CD4-positive, alpha-beta T cell (primary cell): ENCODE measurements at regions of chr1 and their contacts with region 1.

Region 1: DNA sequence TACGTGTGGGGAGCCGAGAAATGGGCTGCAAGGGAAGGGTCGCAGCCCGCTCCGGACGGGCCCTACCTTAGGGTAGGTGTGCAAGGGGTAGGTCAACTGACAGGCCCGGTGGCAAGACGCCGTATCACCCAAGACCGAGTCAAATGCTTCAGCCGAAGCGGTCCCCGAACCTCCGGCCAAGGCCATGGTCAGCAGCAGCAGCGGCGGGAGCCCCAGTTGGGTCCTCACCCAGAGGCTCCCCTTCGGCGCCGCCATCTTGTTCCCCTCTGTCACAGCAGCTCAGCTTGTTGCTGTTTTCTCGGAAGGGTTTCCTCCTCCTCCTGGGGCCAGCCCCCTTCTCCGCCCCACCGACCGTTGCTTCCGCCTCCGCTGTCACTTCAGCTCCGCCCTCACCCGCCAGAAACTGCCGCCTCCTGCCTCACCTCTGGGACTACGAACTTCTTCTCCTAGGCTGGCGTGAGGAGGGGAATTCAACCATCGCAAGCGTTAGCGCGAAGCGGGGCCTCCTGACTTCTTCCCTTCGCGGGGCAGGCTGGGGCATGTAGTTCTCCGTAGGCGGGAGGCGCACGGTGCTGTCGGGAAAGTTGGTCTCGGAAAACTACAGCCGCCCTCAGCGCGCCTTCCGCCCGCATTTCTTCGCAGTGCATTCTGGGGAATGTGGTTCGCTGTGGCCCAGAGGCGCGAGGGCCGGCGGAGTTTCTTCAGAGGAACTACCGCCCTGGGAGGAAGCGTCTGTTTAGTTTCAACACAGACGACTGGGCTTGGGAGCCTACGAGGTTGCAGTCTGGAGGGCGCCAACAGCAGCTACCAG is at the starts of genes TCEANC2 and TMEM59:
- DNase-seq: peak; percentile 93 to 99 (median 95)
- ATAC-seq: peak; percentile 89
- H3K4me3 ChIP-seq: peak within 1 kb of the TSS; percentile 89
- H3K4me3 Mint-ChIP-seq: no peak within 1 kb of the TSS
- H3K27ac ChIP-seq: peak within 1 kb of the TSS; percentile 71 to 90
- H3K27ac Mint-ChIP-seq: no peak within 1 kb of the TSS
- H3K4me1 ChIP-seq: peaks cover 35% of the 10 kb centered on the region
- H3K4me1 Mint-ChIP-seq: peaks cover 45% of the 10 kb centered on the region
- H3K27me3 ChIP-seq: no peaks in the 10 kb centered on the region
- H3K27me3 Mint-ChIP-seq: no peaks in the 10 kb centered on the region
- CTCF ChIP-seq: no peak
- total RNA-seq, gene TCEANC2: 2.3 to 2.7 TPM
- total RNA-seq, gene TMEM59: 128 TPM

Region 2: DNA sequence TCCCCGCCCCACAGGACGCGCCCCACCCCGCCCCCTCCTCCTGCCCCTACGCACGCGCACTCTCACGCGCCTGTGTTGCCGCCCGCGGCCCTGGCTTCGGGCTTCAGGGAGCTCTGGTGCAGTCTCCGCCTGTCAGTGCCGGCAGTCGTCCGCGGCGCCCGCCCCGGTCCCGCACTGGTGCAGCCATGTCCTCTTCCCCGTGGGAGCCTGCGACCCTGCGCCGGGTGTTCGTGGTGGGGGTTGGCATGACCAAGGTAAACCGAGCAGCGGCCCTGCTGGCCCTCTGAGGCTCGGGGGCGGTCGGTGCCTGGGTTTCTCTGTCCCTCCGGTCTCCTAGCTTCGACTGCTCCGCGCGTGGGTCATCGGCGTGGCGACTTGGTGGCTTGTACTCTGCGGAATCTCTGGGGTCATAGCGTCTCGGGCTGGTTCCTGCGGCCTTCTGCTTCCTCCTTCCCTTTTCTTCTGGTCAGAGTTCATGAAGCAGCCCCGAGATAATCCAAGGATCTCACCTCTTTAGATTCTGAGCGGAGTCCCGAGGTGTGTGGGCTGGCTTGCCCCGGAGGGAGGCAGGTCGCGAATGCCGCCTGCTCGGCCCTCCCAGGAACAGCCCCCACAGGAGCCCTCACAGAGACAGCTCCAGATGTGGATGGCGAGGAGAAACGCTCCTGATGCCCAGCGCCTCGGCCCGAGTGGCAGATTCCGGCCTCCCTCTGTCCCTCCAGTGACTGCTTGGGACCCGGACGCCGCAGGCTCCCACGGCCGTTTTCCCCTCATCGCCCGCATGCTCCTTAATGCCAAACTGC is 1125.7 kb before region 1 on chr1 and contains the start of gene SCP2:
- CTCF ChIA-PET with region 1: no interaction called
- POLR2A ChIA-PET with region 1: no interaction called
- intact Hi-C with region 1: loop called in 1 of 2 experiments (anchors 10 kb)
- DNase-seq: peak; percentile 64 to 90 (median 79)
- ATAC-seq: peak; percentile 96
- H3K4me3 ChIP-seq: peak within 1 kb of the TSS; percentile 85
- H3K4me3 Mint-ChIP-seq: peak within 1 kb of the TSS; percentile 81
- H3K27ac ChIP-seq: no peak within 1 kb of the TSS
- H3K27ac Mint-ChIP-seq: peak within 1 kb of the TSS; percentile 38
- H3K4me1 ChIP-seq: peaks cover 23% of the 10 kb centered on the region
- H3K4me1 Mint-ChIP-seq: peaks cover 38% of the 10 kb centered on the region
- H3K27me3 ChIP-seq: no peaks in the 10 kb centered on the region
- H3K27me3 Mint-ChIP-seq: no peaks in the 10 kb centered on the region
- CTCF ChIP-seq: no peak
- total RNA-seq, gene SCP2: 22.7 to 27.0 TPM

Region 3: GRCh38 chr1:53889304-53890298 is 163.5 kb before region 1 on chr1 and contains the start of gene YIPF1:
- CTCF ChIA-PET with region 1: no interaction called
- POLR2A ChIA-PET with region 1: interaction called, 5 read pairs
- intact Hi-C with region 1: loop called in 1 of 2 experiments (anchors 2 kb)
- DNase-seq: peak; percentile 69 to 92 (median 84)
- ATAC-seq: peak; percentile 99
- H3K4me3 ChIP-seq: peak within 1 kb of the TSS; percentile 98
- H3K4me3 Mint-ChIP-seq: peak within 1 kb of the TSS; percentile 94
- H3K27ac ChIP-seq: peak within 1 kb of the TSS; percentile 29 to 45
- H3K27ac Mint-ChIP-seq: peak within 1 kb of the TSS; percentile 93
- H3K4me1 ChIP-seq: peaks cover 18% of the 10 kb centered on the region
- H3K4me1 Mint-ChIP-seq: peaks cover 44% of the 10 kb centered on the region
- H3K27me3 ChIP-seq: no peaks in the 10 kb centered on the region
- H3K27me3 Mint-ChIP-seq: no peaks in the 10 kb centered on the region
- CTCF ChIP-seq: no peak
- total RNA-seq, gene YIPF1: 4.3 to 5.5 TPM

Region 4: GRCh38 chr1:54070171-54070837 is 17.2 kb after region 1 on chr1:
- CTCF ChIA-PET with region 1: no interaction called
- POLR2A ChIA-PET with region 1: no interaction called
- intact Hi-C with region 1: loop called in 1 of 2 experiments (anchors 1 kb)
- DNase-seq: peak in 3 of 14 experiments; percentile 70 to 74 (median 72)
- ATAC-seq: peak; percentile 94
- H3K4me3 ChIP-seq: no peak overlapping the region
- H3K4me3 Mint-ChIP-seq: no peak overlapping the region
- H3K27ac ChIP-seq: no peak overlapping the region
- H3K27ac Mint-ChIP-seq: no peak overlapping the region
- H3K4me1 ChIP-seq: no peaks in the 10 kb centered on the region
- H3K4me1 Mint-ChIP-seq: no peaks in the 10 kb centered on the region
- H3K27me3 ChIP-seq: no peaks in the 10 kb centered on the region
- H3K27me3 Mint-ChIP-seq: no peaks in the 10 kb centered on the region
- CTCF ChIP-seq: peak; percentile 99

Region 5: GRCh38 chr1:54715493-54716298 is 662.6 kb after region 1 on chr1 and contains the start of gene TTC4:
- CTCF ChIA-PET with region 1: no interaction called
- POLR2A ChIA-PET with region 1: interaction called, 8 read pairs
- intact Hi-C with region 1: loop called (anchors 1 to 5 kb)
- DNase-seq: peak; percentile 67 to 93 (median 81)
- ATAC-seq: peak; percentile 97
- H3K4me3 ChIP-seq: peak within 1 kb of the TSS; percentile 87
- H3K4me3 Mint-ChIP-seq: peak within 1 kb of the TSS; percentile 93
- H3K27ac ChIP-seq: peak within 1 kb of the TSS; percentile 43 to 71
- H3K27ac Mint-ChIP-seq: peak within 1 kb of the TSS; percentile 74
- H3K4me1 ChIP-seq: peaks cover 18% of the 10 kb centered on the region
- H3K4me1 Mint-ChIP-seq: peaks cover 40% of the 10 kb centered on the region
- H3K27me3 ChIP-seq: no peaks in the 10 kb centered on the region
- H3K27me3 Mint-ChIP-seq: no peaks in the 10 kb centered on the region
- CTCF ChIP-seq: no peak
- total RNA-seq, gene TTC4: 7.3 to 7.6 TPM

Region 6: GRCh38 chr1:55215256-55216021 is 1162.3 kb after region 1 on chr1 and contains the start of gene USP24:
- CTCF ChIA-PET with region 1: no interaction called
- POLR2A ChIA-PET with region 1: no interaction called
- intact Hi-C with region 1: loop called in 1 of 2 experiments (anchors 10 kb)
- DNase-seq: peak; percentile 74 to 94 (median 83)
- ATAC-seq: peak; percentile 81
- H3K4me3 ChIP-seq: peak within 1 kb of the TSS; percentile 86
- H3K4me3 Mint-ChIP-seq: peak within 1 kb of the TSS; percentile 95
- H3K27ac ChIP-seq: peak within 1 kb of the TSS; percentile 85 to 91
- H3K27ac Mint-ChIP-seq: peak within 1 kb of the TSS; percentile 89
- H3K4me1 ChIP-seq: peaks cover 38% of the 10 kb centered on the region
- H3K4me1 Mint-ChIP-seq: peaks cover 68% of the 10 kb centered on the region
- H3K27me3 ChIP-seq: no peaks in the 10 kb centered on the region
- H3K27me3 Mint-ChIP-seq: no peaks in the 10 kb centered on the region
- CTCF ChIP-seq: no peak
- total RNA-seq, gene USP24: 68.6 to 76.3 TPM